ENCODE measurements at regions of chr3 and their contacts with region 1.

Region 1: DNA sequence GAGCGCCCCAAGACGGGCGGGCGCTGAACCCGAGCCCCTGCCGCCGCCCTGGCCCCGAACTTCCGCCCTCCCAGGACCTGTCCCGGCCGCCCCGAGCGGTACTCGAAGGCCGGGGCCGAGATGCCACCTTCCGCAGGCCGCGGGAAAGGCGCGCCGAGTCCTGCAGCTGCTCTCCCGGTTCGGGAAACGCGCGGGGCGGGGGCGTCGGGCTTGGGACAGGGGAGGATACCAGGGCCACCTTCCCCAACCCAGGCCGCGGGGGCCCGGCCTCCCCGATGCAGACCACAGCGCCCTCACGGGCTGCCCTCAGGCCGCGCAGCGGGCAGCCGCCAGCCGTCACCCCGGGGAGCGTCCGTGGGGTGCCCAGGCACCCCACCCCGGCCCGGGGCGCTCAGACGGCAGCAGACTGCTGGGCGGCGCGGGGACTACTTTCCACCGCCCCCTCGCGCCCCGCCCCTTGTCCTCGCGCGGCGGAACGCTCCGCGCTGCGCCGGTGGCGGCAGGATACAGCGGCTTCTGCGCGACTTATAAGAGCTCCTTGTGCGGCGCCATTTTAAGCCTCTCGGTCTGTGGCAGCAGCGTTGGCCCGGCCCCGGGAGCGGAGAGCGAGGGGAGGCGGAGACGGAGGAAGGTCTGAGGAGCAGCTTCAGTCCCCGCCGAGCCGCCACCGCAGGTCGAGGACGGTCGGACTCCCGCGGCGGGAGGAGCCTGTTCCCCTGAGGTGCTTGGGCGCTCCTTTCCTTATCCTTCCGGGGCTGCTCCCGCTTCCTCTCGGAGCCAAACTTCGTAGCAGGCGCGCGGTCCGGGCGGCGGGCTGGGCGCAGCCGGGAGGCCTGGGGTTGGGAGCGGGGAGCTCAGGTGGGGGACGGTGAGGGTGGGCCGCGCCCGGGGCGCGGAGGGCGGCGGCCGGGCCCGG is at the start of gene CTNNB1:
- DNase-seq: peak; percentile 91
- H3K4me3 Mint-ChIP-seq: peak within 1 kb of the TSS; percentile 98
- H3K27ac Mint-ChIP-seq: peak within 1 kb of the TSS; percentile 94
- H3K4me1 Mint-ChIP-seq: peaks cover 36% of the 10 kb centered on the region
- H3K27me3 Mint-ChIP-seq: peaks cover 21% of the 10 kb centered on the region
- total RNA-seq, gene CTNNB1: 134 to 151 TPM

Region 2: DNA sequence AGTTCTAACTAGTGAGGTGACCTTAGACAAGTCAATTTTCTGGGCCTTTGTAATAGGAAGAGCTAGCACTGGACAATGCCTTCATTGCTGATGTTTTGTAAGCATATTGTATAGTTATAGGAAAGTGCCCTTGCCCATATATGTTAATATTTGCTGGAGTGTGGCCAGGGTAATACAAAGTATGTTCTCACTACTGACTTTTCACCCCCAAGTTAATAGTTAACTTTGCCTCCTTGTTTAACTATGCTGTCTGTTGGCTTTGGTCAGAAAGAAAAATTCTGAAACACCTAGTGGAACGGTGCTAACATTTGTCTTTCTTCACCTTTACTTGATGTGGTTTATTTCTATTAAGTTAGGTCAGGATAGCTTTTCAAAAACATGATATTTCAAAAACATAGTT is 287.3 kb before region 1 on chr3:
- CTCF ChIA-PET with region 1: no interaction called
- POLR2A ChIA-PET with region 1: no interaction called
- DNase-seq: no peak
- H3K4me3 Mint-ChIP-seq: no peak overlapping the region
- H3K27ac Mint-ChIP-seq: no peak overlapping the region
- H3K4me1 Mint-ChIP-seq: no peaks in the 10 kb centered on the region
- H3K27me3 Mint-ChIP-seq: peaks cover 1% of the 10 kb centered on the region

Region 3: GRCh38 chr3:41117398-41117870 is 81.8 kb before region 1 on chr3:
- CTCF ChIA-PET with region 1: no interaction called
- POLR2A ChIA-PET with region 1: interaction called, 31 read pairs
- DNase-seq: peak; percentile 89
- H3K4me3 Mint-ChIP-seq: no peak overlapping the region
- H3K27ac Mint-ChIP-seq: peak overlapping the region; percentile 77
- H3K4me1 Mint-ChIP-seq: peaks cover 24% of the 10 kb centered on the region
- H3K27me3 Mint-ChIP-seq: no peaks in the 10 kb centered on the region

Region 4: GRCh38 chr3:41224120-41224806 is 25.1 kb after region 1 on chr3:
- CTCF ChIA-PET with region 1: no interaction called
- POLR2A ChIA-PET with region 1: interaction called, 20 read pairs
- DNase-seq: no peak
- H3K4me3 Mint-ChIP-seq: no peak overlapping the region
- H3K27ac Mint-ChIP-seq: no peak overlapping the region
- H3K4me1 Mint-ChIP-seq: peaks cover 29% of the 10 kb centered on the region
- H3K27me3 Mint-ChIP-seq: no peaks in the 10 kb centered on the region

Region 5: GRCh38 chr3:41961750-41962679 is 762.8 kb after region 1 on chr3 and contains the start of gene ULK4:
- CTCF ChIA-PET with region 1: no interaction called
- POLR2A ChIA-PET with region 1: interaction called, 11 read pairs
- DNase-seq: peak; percentile 97
- H3K4me3 Mint-ChIP-seq: peak within 1 kb of the TSS; percentile 91
- H3K27ac Mint-ChIP-seq: peak within 1 kb of the TSS; percentile 89
- H3K4me1 Mint-ChIP-seq: peaks cover 25% of the 10 kb centered on the region
- H3K27me3 Mint-ChIP-seq: no peaks in the 10 kb centered on the region
- total RNA-seq, gene ULK4: 14.1 to 18.2 TPM